ENCODE measurements at regions of chr6 and their contacts with region 1.

Region 1: GRCh38 chr6:105402939-105403935 is at the start of gene PREP:
- DNase-seq: peak; percentile 64 to 90 (median 81)
- ATAC-seq: peak; percentile 96
- H3K4me3 ChIP-seq: peak within 1 kb of the TSS; percentile 83
- H3K4me3 Mint-ChIP-seq: peak within 1 kb of the TSS; percentile 92 to 98 (median 94)
- H3K27ac ChIP-seq: peak within 1 kb of the TSS; percentile 66
- H3K27ac Mint-ChIP-seq: peak within 1 kb of the TSS; percentile 45 to 92 (median 76)
- H3K4me1 ChIP-seq: peaks cover 27 to 28% of the 10 kb centered on the region in 2 donors
- H3K4me1 Mint-ChIP-seq: peaks cover 43 to 58% (median 54%) of the 10 kb centered on the region in 7 donors
- H3K27me3 ChIP-seq: no peaks in the 10 kb centered on the region
- H3K27me3 Mint-ChIP-seq: peaks cover 0 to 18% (median 14%) of the 10 kb centered on the region in 5 donors
- total RNA-seq, gene PREP: 22.2 to 46.7 (median 32.1) TPM

Region 2: DNA sequence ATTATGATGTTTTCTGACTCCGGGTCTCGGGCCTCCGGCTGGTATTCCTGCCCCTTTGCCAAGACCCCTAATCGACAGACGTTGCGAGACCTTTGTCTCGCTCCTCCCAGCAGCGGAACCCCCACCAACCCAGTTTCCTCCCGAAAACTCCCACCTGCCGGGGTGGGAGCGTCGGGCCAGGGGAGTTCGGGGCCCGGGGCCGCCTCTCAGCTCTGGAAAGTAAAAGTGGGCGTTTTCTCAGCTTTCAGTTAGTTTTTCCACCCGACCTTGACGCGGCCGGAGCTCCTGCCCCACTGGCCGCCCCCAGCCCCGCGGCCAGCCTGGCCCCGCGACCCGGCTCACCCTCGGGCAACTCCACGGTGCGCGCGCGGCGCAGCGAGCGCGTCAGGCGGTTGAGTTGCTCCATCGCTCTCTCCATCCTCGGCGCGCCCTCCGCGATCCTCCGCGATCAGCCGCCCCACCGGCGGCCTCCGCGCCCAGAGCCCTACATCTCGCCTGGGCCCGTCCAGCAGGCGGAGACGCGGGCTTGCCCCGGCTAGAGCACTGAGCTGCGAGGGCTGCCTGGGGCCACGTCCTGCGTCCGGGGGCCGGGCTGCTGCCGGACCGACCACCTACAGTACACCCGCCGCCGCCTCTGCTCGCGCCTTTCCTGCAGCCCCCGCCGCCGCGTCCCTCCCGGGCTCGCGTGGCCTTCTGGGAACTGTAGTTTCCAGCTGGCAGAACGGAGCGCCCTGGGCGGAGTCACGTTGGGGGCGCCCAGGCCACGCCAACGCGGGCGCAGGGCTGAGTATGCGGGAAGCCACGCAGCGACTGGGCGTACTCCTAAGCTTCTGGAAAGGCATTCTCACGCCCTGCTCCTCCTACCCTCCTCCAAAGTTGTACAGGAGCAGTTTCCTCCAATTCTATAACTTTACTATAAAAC is 543.8 kb before region 1 on chr6 and contains the start of gene HACE1:
- CTCF ChIA-PET with region 1: no interaction called
- POLR2A ChIA-PET with region 1: no interaction called
- intact Hi-C with region 1: loop called (anchors 1 kb)
- DNase-seq: peak; percentile 75 to 91 (median 89)
- ATAC-seq: peak; percentile 98
- H3K4me3 ChIP-seq: peak within 1 kb of the TSS; percentile 79
- H3K4me3 Mint-ChIP-seq: peak within 1 kb of the TSS; percentile 87 to 95 (median 92)
- H3K27ac ChIP-seq: peak within 1 kb of the TSS; percentile 69
- H3K27ac Mint-ChIP-seq: peak within 1 kb of the TSS; percentile 18 to 92 (median 86)
- H3K4me1 ChIP-seq: peaks cover 8 to 9% of the 10 kb centered on the region in 2 donors
- H3K4me1 Mint-ChIP-seq: peaks cover 10 to 30% (median 18%) of the 10 kb centered on the region in 7 donors
- H3K27me3 ChIP-seq: no peaks in the 10 kb centered on the region
- H3K27me3 Mint-ChIP-seq: peaks cover 3 to 20% (median 13%) of the 10 kb centered on the region in 5 donors
- total RNA-seq, gene HACE1: 11.4 to 17.1 (median 16.1) TPM

Region 3: DNA sequence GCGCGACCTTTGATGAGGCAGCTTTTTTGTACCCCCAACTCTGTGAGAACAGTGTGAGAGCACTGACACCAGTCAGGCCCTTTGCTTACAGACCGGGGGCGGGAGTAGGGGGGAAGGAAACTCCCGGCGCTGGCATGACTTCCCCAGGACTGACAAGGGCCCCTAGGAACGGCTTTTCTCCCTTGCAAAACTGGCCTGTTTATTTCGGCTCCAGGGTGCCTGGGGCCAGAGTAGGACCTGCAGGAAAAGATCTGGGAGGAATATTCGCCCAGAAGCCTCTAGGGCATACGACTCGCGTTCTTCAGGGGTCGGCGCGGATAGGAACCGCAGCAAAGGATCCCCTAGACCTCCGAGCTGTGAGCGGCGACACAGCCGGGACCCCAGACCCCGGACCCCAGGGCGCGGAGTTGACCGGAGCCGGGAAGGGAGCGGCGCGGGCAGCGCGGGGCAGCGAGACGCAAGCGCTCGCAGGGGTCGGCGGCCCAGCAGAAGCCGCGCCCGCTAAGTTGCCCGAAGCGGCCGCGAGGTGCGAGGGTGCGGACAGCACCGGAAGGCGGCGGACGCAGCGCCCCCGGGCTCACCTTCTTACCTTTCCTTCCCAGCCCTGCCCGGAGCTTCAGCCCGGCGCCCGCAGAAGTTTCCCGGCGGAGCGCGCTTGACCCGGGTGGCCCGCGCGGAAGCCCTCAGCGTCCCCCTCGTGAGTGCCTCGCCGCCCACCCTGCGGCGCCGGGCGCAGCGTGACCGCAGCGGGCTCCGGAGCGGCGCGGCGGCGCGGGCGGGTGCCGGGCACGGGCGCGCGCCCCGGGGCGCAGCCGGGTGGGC is 223.8 kb before region 1 on chr6 and contains the start of gene POPDC3:
- CTCF ChIA-PET with region 1: no interaction called
- POLR2A ChIA-PET with region 1: no interaction called
- intact Hi-C with region 1: loop called in 1 of 2 experiments (anchors 5 kb)
- DNase-seq: peak in 1 of 9 donors; percentile 23
- ATAC-seq: no peak
- H3K4me3 ChIP-seq: no peak within 1 kb of the TSS
- H3K4me3 Mint-ChIP-seq: peak within 1 kb of the TSS in 6 of 10 donors; percentile 17 to 69 (median 48)
- H3K27ac ChIP-seq: no peak within 1 kb of the TSS
- H3K27ac Mint-ChIP-seq: no peak within 1 kb of the TSS
- H3K4me1 ChIP-seq: no peaks in the 10 kb centered on the region
- H3K4me1 Mint-ChIP-seq: peaks cover 0 to 15% (median 8%) of the 10 kb centered on the region in 7 donors
- H3K27me3 ChIP-seq: peaks cover 0 to 7% of the 10 kb centered on the region in 2 donors
- H3K27me3 Mint-ChIP-seq: peaks cover 56 to 68% (median 62%) of the 10 kb centered on the region in 5 donors
- total RNA-seq, gene POPDC3: not detected

Region 4: DNA sequence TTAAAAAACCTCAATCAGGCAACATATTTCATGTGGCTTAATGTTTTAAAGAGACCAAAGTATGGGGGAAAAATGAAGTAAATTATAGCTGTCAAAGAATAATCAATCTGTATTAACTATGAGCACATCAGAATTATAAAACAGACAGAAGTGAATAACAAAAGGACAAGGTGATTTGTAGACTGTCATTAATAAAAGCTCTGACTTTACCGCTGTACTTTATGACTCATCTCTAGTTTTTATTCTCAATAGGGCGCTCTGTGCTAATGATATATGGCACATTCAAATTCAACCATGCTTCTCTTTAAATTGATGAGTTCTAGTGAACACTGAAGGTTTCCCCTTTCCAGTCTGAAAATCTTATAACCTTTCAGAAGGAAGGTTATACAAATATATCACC is 72.3 kb before region 1 on chr6:
- CTCF ChIA-PET with region 1: no interaction called
- POLR2A ChIA-PET with region 1: no interaction called
- intact Hi-C with region 1: no loop called
- DNase-seq: no peak
- ATAC-seq: no peak
- H3K4me3 ChIP-seq: no peak overlapping the region
- H3K4me3 Mint-ChIP-seq: no peak overlapping the region
- H3K27ac ChIP-seq: no peak overlapping the region
- H3K27ac Mint-ChIP-seq: no peak overlapping the region
- H3K4me1 ChIP-seq: no peaks in the 10 kb centered on the region
- H3K4me1 Mint-ChIP-seq: peaks cover 0 to 11% (median 0%) of the 10 kb centered on the region in 7 donors
- H3K27me3 ChIP-seq: no peaks in the 10 kb centered on the region
- H3K27me3 Mint-ChIP-seq: no peaks in the 10 kb centered on the region

Region 5: DNA sequence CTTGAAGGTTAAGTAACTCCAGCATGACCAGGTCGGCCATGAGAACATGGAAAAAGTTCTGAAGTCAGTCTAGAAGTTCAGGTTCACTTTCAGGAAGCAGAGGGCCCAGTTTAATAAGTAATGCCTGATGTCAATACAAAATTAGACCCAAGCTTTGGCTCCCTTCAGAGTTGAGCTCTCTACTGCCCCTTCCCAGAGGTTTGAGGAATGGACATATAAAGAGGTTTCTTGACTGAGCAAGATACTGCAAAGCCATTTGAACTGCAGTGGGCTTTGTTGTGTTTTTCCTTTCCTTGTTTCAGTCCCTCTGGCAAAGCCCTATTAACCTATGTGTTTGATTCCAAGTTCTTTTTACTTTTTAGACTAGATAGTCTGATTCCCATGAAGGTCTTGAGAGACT is 97.5 kb after region 1 on chr6:
- CTCF ChIA-PET with region 1: no interaction called
- POLR2A ChIA-PET with region 1: no interaction called
- intact Hi-C with region 1: no loop called
- DNase-seq: no peak
- ATAC-seq: no peak
- H3K4me3 ChIP-seq: no peak overlapping the region
- H3K4me3 Mint-ChIP-seq: no peak overlapping the region
- H3K27ac ChIP-seq: no peak overlapping the region
- H3K27ac Mint-ChIP-seq: no peak overlapping the region
- H3K4me1 ChIP-seq: no peaks in the 10 kb centered on the region
- H3K4me1 Mint-ChIP-seq: no peaks in the 10 kb centered on the region
- H3K27me3 ChIP-seq: no peaks in the 10 kb centered on the region
- H3K27me3 Mint-ChIP-seq: peaks cover 0 to 26% (median 2%) of the 10 kb centered on the region in 5 donors

Region 6: DNA sequence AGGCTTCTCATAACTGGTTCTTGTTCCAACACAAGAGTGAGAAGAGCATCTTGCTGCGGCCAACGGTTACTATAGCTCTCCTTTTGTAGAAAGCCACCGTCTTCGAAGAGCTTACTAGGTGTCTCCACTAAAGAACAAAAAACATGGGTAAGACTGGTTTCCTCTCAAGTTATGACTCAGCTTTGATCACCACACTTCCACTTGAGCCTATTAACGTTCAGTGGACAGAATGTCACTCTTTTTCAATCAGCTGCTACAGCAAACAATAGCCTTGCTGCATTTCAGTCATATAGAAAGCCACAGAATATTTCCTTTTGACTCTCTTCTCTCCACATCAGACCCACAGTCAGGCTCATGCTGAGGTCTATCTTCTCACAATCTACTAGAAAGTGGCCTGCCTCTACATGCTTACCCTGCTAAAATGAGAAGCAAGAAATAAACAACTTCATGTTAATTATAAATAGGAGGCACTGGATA is 243.2 kb after region 1 on chr6:
- CTCF ChIA-PET with region 1: no interaction called
- POLR2A ChIA-PET with region 1: no interaction called
- intact Hi-C with region 1: loop called in 1 of 2 experiments (anchors 2 kb)
- DNase-seq: peak in 1 of 9 donors; percentile 36
- ATAC-seq: peak; percentile 81
- H3K4me3 ChIP-seq: no peak overlapping the region
- H3K4me3 Mint-ChIP-seq: peak overlapping the region in 1 of 10 donors; percentile 41
- H3K27ac ChIP-seq: no peak overlapping the region
- H3K27ac Mint-ChIP-seq: peak overlapping the region in 2 of 9 donors; percentile 12 to 83
- H3K4me1 ChIP-seq: peaks cover 0 to 79% of the 10 kb centered on the region in 2 donors
- H3K4me1 Mint-ChIP-seq: peaks cover 30 to 80% (median 44%) of the 10 kb centered on the region in 7 donors
- H3K27me3 ChIP-seq: no peaks in the 10 kb centered on the region
- H3K27me3 Mint-ChIP-seq: peaks cover 0 to 5% (median 0%) of the 10 kb centered on the region in 5 donors

Region 7: GRCh38 chr6:106519460-106520394 is 1116.5 kb after region 1 on chr6:
- CTCF ChIA-PET with region 1: no interaction called
- POLR2A ChIA-PET with region 1: no interaction called
- intact Hi-C with region 1: loop called in 1 of 2 experiments (anchors 5 kb)
- DNase-seq: peak; percentile 38 to 80 (median 72)
- ATAC-seq: peak; percentile 68
- H3K4me3 ChIP-seq: peak overlapping the region; percentile 69
- H3K4me3 Mint-ChIP-seq: peak overlapping the region; percentile 82 to 96 (median 93)
- H3K27ac ChIP-seq: peak overlapping the region; percentile 86
- H3K27ac Mint-ChIP-seq: peak overlapping the region; percentile 92 to 99 (median 95)
- H3K4me1 ChIP-seq: peaks cover 42 to 47% of the 10 kb centered on the region in 2 donors
- H3K4me1 Mint-ChIP-seq: peaks cover 36 to 87% (median 71%) of the 10 kb centered on the region in 7 donors
- H3K27me3 ChIP-seq: no peaks in the 10 kb centered on the region
- H3K27me3 Mint-ChIP-seq: no peaks in the 10 kb centered on the region

Measured in naive thymus-derived CD4-positive, alpha-beta T cell (primary cell).